ENCODE measurements at regions of chr16 and their contacts with region 1.

Region 1: GRCh38 chr16:57863434-57864160 is 61.3 kb upstream of the KIFC3 start:
- DNase-seq: peak; percentile 71 to 88
- H3K4me3 ChIP-seq: no peak overlapping the region
- H3K27ac ChIP-seq: no peak overlapping the region
- H3K4me1 ChIP-seq: peaks cover 3 to 9% (median 7%) of the 10 kb centered on the region in 4 donors
- H3K27me3 ChIP-seq: no peaks in the 10 kb centered on the region
- CTCF ChIP-seq: peak in 5 of 7 experiments; percentile 35 to 63 (median 38)
- EP300 ChIP-seq: no peak
- POLR2A ChIP-seq: no peak

Region 2: GRCh38 chr16:57757326-57757786 is 106.2 kb before region 1 on chr16:
- intact Hi-C with region 1: loop called (anchors 5 kb)
- DNase-seq: peak; percentile 91
- H3K4me3 ChIP-seq: no peak overlapping the region
- H3K27ac ChIP-seq: peak overlapping the region in 3 of 5 donors; percentile 36 to 39 (median 36)
- H3K4me1 ChIP-seq: peaks cover 0 to 9% (median 8%) of the 10 kb centered on the region in 4 donors
- H3K27me3 ChIP-seq: no peaks in the 10 kb centered on the region
- CTCF ChIP-seq: peak in 5 of 7 experiments; percentile 88 to 98 (median 93)
- EP300 ChIP-seq: no peak
- POLR2A ChIP-seq: no peak

Region 3: GRCh38 chr16:57795431-57795878 is 68.1 kb before region 1 on chr16:
- intact Hi-C with region 1: loop called (anchors 10 kb)
- DNase-seq: peak; percentile 73 to 80
- H3K4me3 ChIP-seq: no peak overlapping the region
- H3K27ac ChIP-seq: peak overlapping the region in 1 of 5 donors; percentile 32
- H3K4me1 ChIP-seq: peaks cover 25 to 61% (median 52%) of the 10 kb centered on the region in 4 donors
- H3K27me3 ChIP-seq: no peaks in the 10 kb centered on the region
- CTCF ChIP-seq: peak in 5 of 7 experiments; percentile 22 to 53 (median 33)
- EP300 ChIP-seq: no peak
- POLR2A ChIP-seq: no peak

Region 4: GRCh38 chr16:57816334-57816745 is 47.3 kb before region 1 on chr16:
- intact Hi-C with region 1: no loop called
- DNase-seq: peak; percentile 89 to 90
- H3K4me3 ChIP-seq: no peak overlapping the region
- H3K27ac ChIP-seq: peak overlapping the region; percentile 67 to 76 (median 73)
- H3K4me1 ChIP-seq: peaks cover 14 to 24% (median 17%) of the 10 kb centered on the region in 4 donors
- H3K27me3 ChIP-seq: no peaks in the 10 kb centered on the region
- CTCF ChIP-seq: no peak
- EP300 ChIP-seq: no peak
- POLR2A ChIP-seq: no peak

Region 5: GRCh38 chr16:57984331-57985203 is 121.0 kb after region 1 on chr16:
- intact Hi-C with region 1: no loop called
- DNase-seq: peak; percentile 87 to 96
- H3K4me3 ChIP-seq: peak overlapping the region; percentile 54 to 65 (median 57)
- H3K27ac ChIP-seq: peak overlapping the region in 3 of 5 donors; percentile 41 to 67 (median 60)
- H3K4me1 ChIP-seq: peaks cover 16 to 24% (median 21%) of the 10 kb centered on the region in 4 donors
- H3K27me3 ChIP-seq: peaks cover 0 to 23% (median 4%) of the 10 kb centered on the region in 3 donors
- CTCF ChIP-seq: no peak
- EP300 ChIP-seq: no peak
- POLR2A ChIP-seq: no peak

Region 6: GRCh38 chr16:58853854-58854791 is 990.5 kb after region 1 on chr16:
- intact Hi-C with region 1: no loop called
- DNase-seq: no peak
- H3K4me3 ChIP-seq: no peak overlapping the region
- H3K27ac ChIP-seq: no peak overlapping the region
- H3K4me1 ChIP-seq: no peaks in the 10 kb centered on the region
- H3K27me3 ChIP-seq: no peaks in the 10 kb centered on the region
- CTCF ChIP-seq: no peak
- EP300 ChIP-seq: no peak
- POLR2A ChIP-seq: no peak

Measured in stomach (tissue), 19 donors.